ENCODE measurements at regions of chr11 and their contacts with region 1.

Region 1: DNA sequence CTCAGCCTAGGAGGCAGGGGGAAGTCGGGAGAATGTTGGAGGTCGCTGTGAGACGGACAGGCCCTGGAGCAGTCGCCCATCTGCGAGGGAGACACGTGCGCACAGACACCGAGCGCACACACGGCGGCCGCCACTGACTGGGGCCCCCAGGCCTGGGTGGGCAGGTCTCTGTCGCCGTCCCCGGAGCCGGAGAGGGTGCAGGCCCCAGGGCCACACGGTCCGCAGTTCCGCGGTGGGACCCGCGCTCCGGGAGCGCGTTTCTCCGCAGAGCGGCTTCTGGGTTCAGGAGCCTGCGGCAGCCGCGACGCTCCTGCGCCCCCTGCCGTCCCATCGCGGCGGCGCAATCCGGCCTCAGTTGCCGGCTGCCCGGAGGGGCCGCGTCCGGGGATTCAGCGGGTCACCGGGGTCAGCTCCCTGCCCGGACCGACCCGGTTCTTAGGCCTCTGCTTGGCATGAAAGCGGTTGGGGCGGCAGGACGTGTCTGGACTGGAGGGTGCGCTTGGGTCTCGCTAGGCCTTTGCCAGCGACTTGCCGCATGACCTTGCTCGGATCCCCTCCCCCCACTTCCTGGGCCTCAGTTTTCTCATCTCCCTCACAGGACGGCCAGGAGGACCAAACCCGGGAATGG is 31.2 kb downstream of the PDE2A start:
- DNase-seq: peak; percentile 69
- ATAC-seq: peak; percentile 67
- H3K4me3 ChIP-seq: peak overlapping the region; percentile 72
- H3K27ac ChIP-seq: no peak overlapping the region
- H3K4me1 ChIP-seq: peaks cover 13% of the 10 kb centered on the region
- H3K27me3 ChIP-seq: peaks cover 18% of the 10 kb centered on the region
- CTCF ChIP-seq: peak; percentile 91

Region 2: DNA sequence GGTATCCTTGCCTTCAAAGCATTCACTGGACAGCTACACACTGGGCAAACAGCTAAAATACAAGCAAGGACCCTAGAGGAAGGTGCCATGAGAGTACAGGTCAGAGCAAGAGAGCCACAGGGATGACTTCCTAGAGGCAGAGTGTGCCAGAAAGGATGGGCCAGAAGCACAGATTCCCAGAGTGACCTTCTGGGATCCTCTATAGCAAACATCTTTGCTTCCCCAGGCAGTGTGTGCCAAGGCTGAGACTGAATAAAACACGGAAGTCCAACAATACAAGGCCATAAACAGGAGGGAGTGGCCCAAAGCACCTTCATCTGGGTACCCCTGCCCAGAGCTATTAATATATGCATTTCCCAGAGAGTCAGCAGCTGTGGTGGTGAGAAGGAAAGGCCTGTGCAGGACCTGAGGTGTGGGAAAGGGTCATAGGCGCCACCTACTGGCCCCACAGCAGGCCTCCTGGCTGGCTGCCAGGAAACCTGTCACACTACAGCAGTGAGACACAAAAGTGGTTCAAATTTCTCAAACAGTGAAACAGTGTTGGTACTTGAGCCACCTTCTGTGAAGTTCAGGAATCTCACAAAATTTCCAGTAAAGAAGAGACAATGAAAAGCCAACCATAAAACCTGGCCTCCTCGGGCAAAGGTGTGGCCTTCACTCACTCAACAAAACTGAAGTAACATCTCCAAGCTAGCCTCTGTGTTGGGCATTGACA is 228.9 kb before region 1 on chr11:
- CTCF ChIA-PET with region 1: no interaction called
- POLR2A ChIA-PET with region 1: no interaction called
- intact Hi-C with region 1: no loop called
- DNase-seq: peak; percentile 90
- ATAC-seq: peak; percentile 95
- H3K4me3 ChIP-seq: no peak overlapping the region
- H3K27ac ChIP-seq: no peak overlapping the region
- H3K4me1 ChIP-seq: peaks cover 5% of the 10 kb centered on the region; the same call in 1 of the 2 replicates
- H3K27me3 ChIP-seq: no peaks in the 10 kb centered on the region
- CTCF ChIP-seq: peak; percentile 96

Region 3: DNA sequence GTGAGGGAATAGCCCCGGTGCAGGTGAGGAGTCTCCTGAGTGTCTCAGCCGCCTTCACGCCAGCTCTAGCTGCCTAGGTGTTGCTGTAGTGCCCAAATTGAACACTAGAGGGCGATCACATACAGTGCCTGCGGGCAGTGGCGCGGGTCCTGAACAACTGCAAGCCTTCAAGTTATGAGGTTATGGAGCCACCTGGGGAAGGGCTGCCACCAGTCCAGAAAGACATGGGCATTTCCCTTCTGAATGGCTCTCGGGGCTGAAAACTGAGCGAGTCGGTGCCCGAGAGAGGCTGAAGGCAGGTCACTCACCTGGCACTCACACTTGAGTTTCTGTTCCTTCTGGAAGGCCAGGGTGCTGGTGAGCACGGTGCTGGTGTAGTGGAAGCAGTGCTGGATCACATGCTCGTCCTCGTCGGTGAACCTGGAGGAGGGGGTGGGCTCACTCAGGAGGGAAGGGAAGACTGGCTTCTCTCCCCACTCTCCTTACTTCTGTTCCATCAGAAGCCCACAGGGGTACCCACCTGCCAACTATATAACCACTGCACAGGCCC is 57.2 kb before region 1 on chr11:
- CTCF ChIA-PET with region 1: no interaction called
- POLR2A ChIA-PET with region 1: no interaction called
- intact Hi-C with region 1: loop called (anchors 1 kb)
- DNase-seq: peak; percentile 91
- ATAC-seq: peak; percentile 95
- H3K4me3 ChIP-seq: no peak overlapping the region
- H3K27ac ChIP-seq: no peak overlapping the region
- H3K4me1 ChIP-seq: no peaks in the 10 kb centered on the region
- H3K27me3 ChIP-seq: no peaks in the 10 kb centered on the region
- CTCF ChIP-seq: peak; percentile 96

Region 4: GRCh38 chr11:72598906-72599305 is 44.1 kb before region 1 on chr11:
- CTCF ChIA-PET with region 1: interaction called, 3 read pairs
- POLR2A ChIA-PET with region 1: no interaction called
- intact Hi-C with region 1: loop called (anchors 1 kb)
- DNase-seq: peak; percentile 33
- ATAC-seq: peak; percentile 73
- H3K4me3 ChIP-seq: no peak overlapping the region
- H3K27ac ChIP-seq: no peak overlapping the region
- H3K4me1 ChIP-seq: 0 out of 2 replicates have a peak, but pooled peaks cover 5% of the 10 kb centered on the region
- H3K27me3 ChIP-seq: peaks cover 25% of the 10 kb centered on the region; the same call in 1 of the 2 replicates
- CTCF ChIP-seq: peak; percentile 58

Region 5: DNA sequence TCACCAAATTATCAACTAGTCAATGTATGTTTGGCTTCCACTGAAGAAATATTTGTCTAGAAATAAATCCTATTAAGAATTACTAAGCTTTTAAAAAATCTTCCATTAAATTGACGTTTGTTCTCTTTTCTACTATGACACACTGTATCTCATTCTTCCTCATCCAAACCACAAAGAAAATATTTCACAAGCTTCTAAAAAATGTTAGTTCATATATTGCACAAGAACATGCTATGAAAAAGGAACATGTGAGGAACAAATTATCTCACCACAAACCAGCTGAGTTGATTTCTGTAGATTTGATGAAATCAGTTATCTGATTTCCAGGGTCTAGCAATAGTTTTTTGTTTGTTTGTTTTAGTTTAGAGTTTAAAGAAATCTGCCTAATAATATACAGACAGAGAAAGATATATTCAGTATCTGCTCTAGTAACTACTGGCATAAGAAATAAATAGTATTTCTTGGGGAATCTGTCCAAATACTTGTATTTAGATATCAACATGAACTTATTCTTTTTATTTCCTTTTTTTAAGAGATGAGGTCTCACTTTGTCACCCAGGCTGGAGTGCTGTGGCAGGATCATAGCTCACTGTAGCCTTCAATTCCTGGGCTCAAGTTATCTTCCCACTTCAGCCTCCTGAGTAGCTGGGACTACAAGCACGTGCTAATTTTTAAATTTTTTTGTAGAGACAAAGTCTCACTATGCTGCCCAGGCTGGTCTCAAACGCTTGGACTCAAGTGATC is 333.0 kb after region 1 on chr11:
- CTCF ChIA-PET with region 1: no interaction called
- POLR2A ChIA-PET with region 1: no interaction called
- intact Hi-C with region 1: no loop called
- DNase-seq: peak; percentile 85
- ATAC-seq: peak; percentile 91
- H3K4me3 ChIP-seq: no peak overlapping the region
- H3K27ac ChIP-seq: peak overlapping the region; percentile 58
- H3K4me1 ChIP-seq: peaks cover 14% of the 10 kb centered on the region
- H3K27me3 ChIP-seq: no peaks in the 10 kb centered on the region
- CTCF ChIP-seq: no peak

Measured in PC-3 (cell line).